ENCODE measurements at regions of chr4 and their contacts with region 1.

Region 1: GRCh38 chr4:122577808-122578781 is 42.8 kb downstream of the IL21 start:
- DNase-seq: peak; percentile 70
- H3K4me3 Mint-ChIP-seq: peak overlapping the region; percentile 80
- H3K27ac Mint-ChIP-seq: peak overlapping the region; percentile 96
- H3K4me1 Mint-ChIP-seq: peaks cover 63% of the 10 kb centered on the region
- H3K27me3 Mint-ChIP-seq: no peaks in the 10 kb centered on the region

Region 2: DNA sequence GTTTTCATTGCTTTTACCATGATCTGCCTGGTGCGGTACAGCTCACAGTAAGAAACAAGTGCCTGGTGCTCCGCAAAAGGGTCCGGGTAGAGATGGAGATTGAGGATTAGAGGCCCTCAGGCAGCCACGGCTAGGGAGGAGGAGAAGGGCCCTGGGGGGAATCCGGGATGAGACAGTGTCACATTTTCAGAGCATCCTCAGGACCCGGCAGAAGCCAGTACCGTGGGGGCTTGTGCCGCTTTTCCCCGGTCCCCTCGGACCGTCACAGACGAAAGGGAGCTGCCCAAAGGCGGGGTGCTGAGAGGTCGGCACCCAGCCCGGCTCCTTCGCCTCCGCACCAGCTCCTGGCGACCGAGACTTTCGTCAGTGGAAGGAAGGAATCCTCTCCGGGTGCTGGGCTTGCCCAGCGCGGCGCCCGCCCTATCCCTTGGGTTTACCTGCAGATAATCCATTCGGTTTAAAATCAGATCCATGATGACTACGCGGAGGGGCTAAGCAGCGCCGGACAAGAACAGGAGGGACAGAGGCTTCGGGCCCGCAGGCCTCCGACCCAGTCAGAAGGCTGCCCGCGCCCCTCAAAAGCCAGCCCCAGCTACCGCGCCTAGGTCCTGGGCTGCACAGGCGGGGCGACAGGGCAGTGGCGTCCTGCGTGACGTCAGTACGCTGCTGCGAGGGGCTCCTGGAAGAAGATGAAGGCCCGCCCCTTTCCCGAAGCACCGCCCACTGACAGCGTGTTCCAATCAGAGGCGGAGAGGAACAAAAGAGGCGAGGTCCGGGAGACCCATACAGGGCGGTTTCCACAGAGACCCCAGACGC is 708.0 kb before region 1 on chr4 and contains the start of gene BBS7:
- intact Hi-C with region 1: loop called (anchors 1 kb)
- DNase-seq: peak; percentile 94
- H3K4me3 Mint-ChIP-seq: peak within 1 kb of the TSS; percentile 99
- H3K27ac Mint-ChIP-seq: peak within 1 kb of the TSS; percentile 91
- H3K4me1 Mint-ChIP-seq: peaks cover 23% of the 10 kb centered on the region
- H3K27me3 Mint-ChIP-seq: peaks cover 22% of the 10 kb centered on the region
- total RNA-seq, gene BBS7: 16.9 and 20.2 TPM in 2 replicates

Region 3: DNA sequence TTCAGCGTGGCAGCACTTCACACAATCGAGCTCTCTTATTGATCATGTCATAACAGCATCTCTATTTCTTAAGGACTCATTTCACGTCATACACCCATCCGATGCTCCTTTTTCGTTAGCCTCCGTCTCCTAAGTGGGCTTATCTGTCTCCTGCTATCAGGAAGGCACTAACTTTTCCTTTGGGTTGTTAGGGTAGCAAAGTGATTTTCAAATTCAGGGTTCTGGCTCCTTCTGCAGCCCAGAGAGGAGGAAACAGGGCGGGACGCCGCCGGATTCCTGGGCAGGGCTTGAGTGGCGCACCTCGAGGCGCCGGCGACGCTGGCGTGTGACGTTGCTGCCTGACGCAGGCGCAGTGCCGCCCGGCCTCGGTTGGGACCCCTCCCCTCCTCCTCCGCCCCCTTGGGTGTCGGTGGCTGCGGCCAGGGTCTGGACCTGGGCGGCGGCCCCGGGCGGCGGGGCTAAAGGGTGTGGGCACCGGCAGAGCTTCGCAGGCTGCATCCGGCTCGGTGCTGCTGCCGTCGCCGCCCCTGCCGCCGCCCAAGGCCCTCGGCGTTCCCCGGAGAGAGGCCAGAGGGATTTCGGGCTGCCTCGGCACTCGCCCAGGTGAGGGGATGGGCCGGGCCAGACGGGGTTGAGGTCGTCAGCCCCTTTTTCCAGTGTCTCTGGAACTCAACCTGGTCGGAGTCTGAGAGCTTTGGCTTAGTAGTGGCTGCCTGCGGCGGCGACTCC is 425.9 kb before region 1 on chr4 and contains the start of gene BLTP1:
- intact Hi-C with region 1: loop called (anchors 1 kb)
- DNase-seq: peak; percentile 89
- H3K4me3 Mint-ChIP-seq: peak within 1 kb of the TSS; percentile 97
- H3K27ac Mint-ChIP-seq: peak within 1 kb of the TSS; percentile 98
- H3K4me1 Mint-ChIP-seq: peaks cover 61% of the 10 kb centered on the region
- H3K27me3 Mint-ChIP-seq: no peaks in the 10 kb centered on the region
- total RNA-seq, gene BLTP1: 25.4 and 30.8 TPM in 2 replicates

Region 4: GRCh38 chr4:122356317-122356808 is 221.7 kb before region 1 on chr4:
- intact Hi-C with region 1: loop called (anchors 5 kb)
- DNase-seq: no peak
- H3K4me3 Mint-ChIP-seq: no peak overlapping the region
- H3K27ac Mint-ChIP-seq: no peak overlapping the region
- H3K4me1 Mint-ChIP-seq: no peaks in the 10 kb centered on the region
- H3K27me3 Mint-ChIP-seq: no peaks in the 10 kb centered on the region

Region 5: GRCh38 chr4:122552898-122553297 is 25.2 kb before region 1 on chr4:
- intact Hi-C with region 1: loop called (anchors 1 kb)
- DNase-seq: no peak
- H3K4me3 Mint-ChIP-seq: no peak overlapping the region
- H3K27ac Mint-ChIP-seq: peak overlapping the region; percentile 28
- H3K4me1 Mint-ChIP-seq: peaks cover 79% of the 10 kb centered on the region
- H3K27me3 Mint-ChIP-seq: no peaks in the 10 kb centered on the region

Region 6: GRCh38 chr4:122716825-122717448 is 138.8 kb after region 1 on chr4:
- intact Hi-C with region 1: loop called (anchors 1 kb)
- DNase-seq: peak; percentile 55
- H3K4me3 Mint-ChIP-seq: peak overlapping the region; percentile 25
- H3K27ac Mint-ChIP-seq: peak overlapping the region; percentile 81
- H3K4me1 Mint-ChIP-seq: peaks cover 46% of the 10 kb centered on the region
- H3K27me3 Mint-ChIP-seq: peaks cover 2% of the 10 kb centered on the region